ENCODE measurements at regions of chr2 and their contacts with region 1.

Region 1: GRCh38 chr2:85551698-85552678 is 9.3 kb downstream of the GGCX start:
- DNase-seq: peak; percentile 60 to 93
- H3K4me3 ChIP-seq: no peak overlapping the region
- H3K27ac ChIP-seq: no peak overlapping the region
- H3K4me1 ChIP-seq: no peaks in the 10 kb centered on the region
- H3K27me3 ChIP-seq: no peaks in the 10 kb centered on the region
- CTCF ChIP-seq: peak; percentile 70 to 93 (median 93)
- EP300 ChIP-seq: no peak
- POLR2A ChIP-seq: no peak
- RAD21 ChIP-seq: peak; percentile 98

Region 2: DNA sequence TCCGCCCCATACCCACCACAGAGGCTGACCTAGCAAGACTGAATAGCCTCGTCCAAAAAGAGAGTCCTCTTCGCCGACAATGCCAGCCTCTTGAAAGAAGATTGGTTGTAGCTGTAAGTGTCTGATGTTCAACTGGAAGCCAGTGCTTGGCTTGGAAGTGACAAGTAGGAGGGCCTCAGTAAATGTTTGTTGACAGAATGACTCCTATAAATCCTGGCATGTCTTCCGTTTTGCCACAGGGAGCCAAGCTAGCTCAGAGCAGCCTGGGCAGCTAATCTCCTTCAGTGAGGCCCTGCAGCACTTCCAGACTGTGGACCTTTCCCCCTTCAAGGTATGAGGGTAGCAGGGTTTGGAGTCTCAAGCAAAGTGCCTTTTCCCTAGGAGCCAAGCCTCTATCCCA is 182.5 kb before region 1 on chr2:
- CTCF ChIA-PET with region 1: interaction called, 16 read pairs
- POLR2A ChIA-PET with region 1: interaction called, 3 read pairs
- DNase-seq: no peak
- H3K4me3 ChIP-seq: no peak overlapping the region
- H3K27ac ChIP-seq: no peak overlapping the region
- H3K4me1 ChIP-seq: no peaks in the 10 kb centered on the region
- H3K27me3 ChIP-seq: no peaks in the 10 kb centered on the region
- CTCF ChIP-seq: no peak
- EP300 ChIP-seq: no peak
- POLR2A ChIP-seq: no peak
- RAD21 ChIP-seq: no peak

Region 3: GRCh38 chr2:85396531-85397470 is 155.2 kb before region 1 on chr2:
- CTCF ChIA-PET with region 1: interaction called, 102 read pairs
- POLR2A ChIA-PET with region 1: interaction called, 396 read pairs
- DNase-seq: no peak
- H3K4me3 ChIP-seq: no peak overlapping the region
- H3K27ac ChIP-seq: no peak overlapping the region
- H3K4me1 ChIP-seq: peaks cover 0 to 6% (median under 1%) of the 10 kb centered on the region in 4 experiments; a peak in 2 of 7 replicates
- H3K27me3 ChIP-seq: no peaks in the 10 kb centered on the region
- CTCF ChIP-seq: no peak
- EP300 ChIP-seq: no peak
- POLR2A ChIP-seq: no peak
- RAD21 ChIP-seq: no peak

Region 4: GRCh38 chr2:85455552-85456090 is 96.4 kb before region 1 on chr2:
- CTCF ChIA-PET with region 1: interaction called, 12 read pairs
- POLR2A ChIA-PET with region 1: interaction called, 1,889 read pairs
- DNase-seq: no peak
- H3K4me3 ChIP-seq: no peak overlapping the region
- H3K27ac ChIP-seq: no peak overlapping the region
- H3K4me1 ChIP-seq: peaks cover 7 to 14% (median 10%) of the 10 kb centered on the region in 4 experiments
- H3K27me3 ChIP-seq: peaks cover 0 to 3% (median 1%) of the 10 kb centered on the region in 4 experiments; a peak in 2 of 7 replicates
- CTCF ChIP-seq: peak in 2 of 3 experiments; percentile 7 to 22; a peak in 1 of 4 replicates
- EP300 ChIP-seq: no peak
- POLR2A ChIP-seq: no peak
- RAD21 ChIP-seq: no peak

Region 5: DNA sequence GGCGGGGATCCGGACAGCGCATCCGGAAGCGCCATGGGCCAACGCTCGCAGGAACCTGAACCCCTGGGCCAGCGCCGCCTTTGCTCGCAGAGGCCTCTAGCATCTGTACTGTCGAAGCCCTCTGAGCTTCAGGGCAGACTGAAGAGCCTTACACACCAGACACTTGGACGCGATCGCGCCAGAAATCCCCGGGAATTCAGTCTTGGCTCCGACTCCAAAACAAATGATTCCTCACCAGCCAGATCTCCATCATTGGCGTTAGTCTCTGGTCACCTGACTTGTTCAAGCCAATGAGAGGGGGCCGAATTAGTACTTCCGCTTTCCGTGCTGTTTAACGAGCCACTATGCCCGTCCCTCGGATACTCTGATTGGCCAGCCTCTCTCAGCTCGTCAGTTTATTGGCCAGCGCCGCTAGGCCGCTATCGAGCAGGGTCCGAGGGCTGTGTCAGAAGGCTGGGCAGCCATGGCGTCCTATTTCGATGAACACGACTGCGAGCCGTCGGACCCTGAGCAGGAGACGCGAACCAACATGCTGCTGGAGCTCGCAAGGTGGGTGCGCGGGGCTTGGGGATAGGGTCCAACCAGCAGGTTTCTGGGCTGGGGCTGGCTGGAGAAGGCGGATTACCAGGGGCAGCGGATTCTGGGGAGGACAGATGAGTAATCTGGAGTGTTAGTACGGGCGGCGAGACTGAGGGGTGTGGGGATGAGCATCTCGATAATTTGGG is 43.5 kb after region 1 on chr2 and contains the start of gene RNF181:
- CTCF ChIA-PET with region 1: interaction called, 4 read pairs
- POLR2A ChIA-PET with region 1: interaction called, 23 read pairs
- DNase-seq: peak; percentile 85 to 91
- H3K4me3 ChIP-seq: peak within 1 kb of the TSS; percentile 77 to 88 (median 84)
- H3K27ac ChIP-seq: peak within 1 kb of the TSS; percentile 83
- H3K4me1 ChIP-seq: peaks cover 0 to 11% (median 3%) of the 10 kb centered on the region in 4 experiments; a peak in 4 of 7 replicates
- H3K27me3 ChIP-seq: peaks cover 0 to under 1% (median 0%) of the 10 kb centered on the region in 4 experiments; a peak in 1 of 7 replicates
- CTCF ChIP-seq: no peak
- EP300 ChIP-seq: no peak
- POLR2A ChIP-seq: peak; percentile 78 to 84
- RAD21 ChIP-seq: no peak
- total RNA-seq, gene RNF181: 97.2 and 99.5 TPM in 2 replicates

Measured in H1 (cell line).